HepG2 (cell line): ENCODE measurements at regions of chr9 and their contacts with region 1.

Region 1: DNA sequence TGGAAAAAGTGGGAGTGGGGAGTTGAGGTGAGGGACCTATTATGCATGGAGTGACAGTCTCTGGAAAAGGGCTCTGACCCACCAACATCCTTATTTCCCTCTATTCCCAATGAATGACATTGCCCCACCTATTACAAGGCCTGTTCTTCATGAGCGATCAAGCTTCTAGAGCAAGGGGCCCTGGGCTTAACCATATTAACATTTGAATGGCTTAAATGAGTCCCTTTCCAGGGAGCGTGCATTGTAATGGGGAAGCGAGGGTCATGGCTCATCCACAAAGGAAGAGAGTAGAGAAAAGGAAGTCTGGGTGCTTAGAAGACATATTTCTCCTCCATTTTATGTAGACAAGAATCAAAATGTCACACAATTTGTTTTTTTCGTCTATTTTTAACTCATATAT is 255.5 kb downstream of the CAAP1 start:
- DNase-seq: no peak
- ATAC-seq: no peak
- H3K4me3 ChIP-seq: no peak overlapping the region
- H3K27ac ChIP-seq: no peak overlapping the region
- H3K4me1 ChIP-seq: no peaks in the 10 kb centered on the region
- H3K27me3 ChIP-seq: no peaks in the 10 kb centered on the region
- CTCF ChIP-seq: no peak
- EP300 ChIP-seq: no peak
- POLR2A ChIP-seq: no peak
- RAD21 ChIP-seq: no peak

Region 2: GRCh38 chr9:26694381-26695297 is 57.5 kb after region 1 on chr9:
- CTCF ChIA-PET with region 1: no interaction called
- POLR2A ChIA-PET with region 1: no interaction called
- in situ Hi-C with region 1: no loop called
- intact Hi-C with region 1: loop called (anchors 10 kb)
- DNase-seq: no peak
- ATAC-seq: no peak
- H3K4me3 ChIP-seq: no peak overlapping the region
- H3K27ac ChIP-seq: no peak overlapping the region
- H3K4me1 ChIP-seq: no peaks in the 10 kb centered on the region
- H3K27me3 ChIP-seq: no peaks in the 10 kb centered on the region
- CTCF ChIP-seq: no peak
- EP300 ChIP-seq: no peak
- POLR2A ChIP-seq: no peak
- RAD21 ChIP-seq: no peak

Region 3: GRCh38 chr9:26723486-26723885 is 86.4 kb after region 1 on chr9:
- CTCF ChIA-PET with region 1: no interaction called
- POLR2A ChIA-PET with region 1: no interaction called
- in situ Hi-C with region 1: no loop called
- intact Hi-C with region 1: no loop called
- DNase-seq: peak; percentile 20
- ATAC-seq: peak; percentile 94
- H3K4me3 ChIP-seq: no peak overlapping the region
- H3K27ac ChIP-seq: no peak overlapping the region
- H3K4me1 ChIP-seq: no peaks in the 10 kb centered on the region
- H3K27me3 ChIP-seq: no peaks in the 10 kb centered on the region
- CTCF ChIP-seq: peak; percentile 69
- EP300 ChIP-seq: no peak
- POLR2A ChIP-seq: no peak
- RAD21 ChIP-seq: no peak